Heart right ventricle (tissue), 16 donors: ENCODE measurements at regions of chr19 and their contacts with region 1.

Region 1: DNA sequence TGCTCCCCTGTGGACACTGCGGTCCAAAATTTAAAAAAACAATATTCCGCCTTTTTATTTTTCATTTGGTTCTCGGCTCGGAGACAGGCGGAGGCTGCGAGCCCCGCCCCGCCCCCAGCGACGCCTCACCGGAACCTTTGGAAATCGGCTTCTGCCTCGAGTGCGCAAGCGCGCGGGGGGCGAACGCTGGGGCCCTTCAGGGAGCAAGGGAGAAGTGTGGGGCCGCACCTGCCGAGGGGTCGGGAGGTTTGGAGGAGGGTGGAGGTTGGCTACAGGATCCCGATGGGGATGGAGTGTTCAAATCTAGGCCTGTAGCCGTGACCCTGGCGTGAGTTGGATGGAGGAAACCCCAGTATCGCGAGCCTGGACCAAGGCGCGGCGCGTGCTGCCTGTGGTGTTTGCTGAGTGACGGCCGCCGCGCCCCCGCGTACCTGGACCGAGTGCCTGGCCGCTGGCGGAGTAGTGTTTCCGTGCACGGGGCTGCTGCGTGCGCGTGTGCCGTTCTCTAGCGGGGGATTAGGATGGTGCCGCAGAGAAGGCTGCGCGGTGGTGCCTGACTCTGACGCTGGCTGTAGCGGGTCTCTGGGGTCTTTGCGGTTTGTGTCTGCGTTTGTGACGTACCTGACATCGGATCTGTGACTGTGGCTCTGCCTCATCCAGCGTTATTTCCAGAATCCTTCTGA is 565 bp upstream of the ZFP30 start:
- DNase-seq: peak; percentile 86 to 88
- ATAC-seq: peak; percentile 77 to 93 (median 88)
- H3K4me3 ChIP-seq: peak overlapping the region; percentile 63 to 90 (median 80)
- H3K27ac ChIP-seq: peak overlapping the region; percentile 39 to 93 (median 90)
- H3K4me1 ChIP-seq: peaks cover 0 to 31% (median 24%) of the 10 kb centered on the region in 9 donors
- H3K27me3 ChIP-seq: no peaks in the 10 kb centered on the region
- CTCF ChIP-seq: peak in 1 of 9 donors; percentile 9

Region 2: DNA sequence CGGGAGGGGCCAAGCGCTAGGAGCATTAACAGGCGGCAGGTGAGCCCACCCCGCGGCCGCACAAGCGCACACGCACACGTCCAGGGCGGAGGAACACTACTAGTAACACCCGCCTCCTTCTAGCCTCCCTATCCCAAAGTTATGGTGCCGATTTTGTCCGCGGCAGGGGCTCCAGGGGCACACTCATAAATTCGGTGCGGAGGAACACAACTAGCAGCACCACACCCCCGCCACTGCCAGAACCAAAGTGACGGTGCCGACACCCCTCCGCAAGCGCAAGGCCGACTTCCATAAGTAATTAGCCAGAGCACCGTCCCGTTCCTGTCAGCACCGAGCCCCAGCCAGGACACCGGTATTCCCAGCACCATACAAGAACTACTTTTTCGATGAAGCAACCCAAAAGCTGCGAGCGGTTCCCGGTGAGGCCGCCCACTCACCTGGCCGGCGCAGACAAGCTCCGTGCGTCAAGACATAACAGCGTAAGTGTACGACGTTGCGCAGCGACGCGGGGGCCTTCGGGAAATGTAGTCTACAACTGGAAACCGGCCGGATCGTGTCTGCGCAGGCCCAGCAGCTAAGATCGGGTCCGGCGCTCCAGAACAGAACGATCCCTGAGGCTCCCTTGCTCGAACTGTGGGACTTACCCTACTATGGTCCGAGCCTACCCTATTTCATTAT is 61.4 kb before region 1 on chr19 and contains the starts of genes ZNF540 and ZNF571:
- intact Hi-C with region 1: loop called in 1 of 10 experiments (anchors 5 kb)
- DNase-seq: peak; percentile 92 to 95
- ATAC-seq: peak; percentile 99 to 100 (median 100)
- H3K4me3 ChIP-seq: peak within 1 kb of the TSS; percentile 51 to 98 (median 80)
- H3K27ac ChIP-seq: peak within 1 kb of the TSS; percentile 63 to 93 (median 90)
- H3K4me1 ChIP-seq: peaks cover 0 to 22% (median 15%) of the 10 kb centered on the region in 9 donors
- H3K27me3 ChIP-seq: no peaks in the 10 kb centered on the region
- CTCF ChIP-seq: no peak
- total RNA-seq, gene ZNF540: 3.1 to 7.2 (median 5.0) TPM
- total RNA-seq, gene ZNF571: 2.1 to 5.1 (median 3.5) TPM

Region 3: DNA sequence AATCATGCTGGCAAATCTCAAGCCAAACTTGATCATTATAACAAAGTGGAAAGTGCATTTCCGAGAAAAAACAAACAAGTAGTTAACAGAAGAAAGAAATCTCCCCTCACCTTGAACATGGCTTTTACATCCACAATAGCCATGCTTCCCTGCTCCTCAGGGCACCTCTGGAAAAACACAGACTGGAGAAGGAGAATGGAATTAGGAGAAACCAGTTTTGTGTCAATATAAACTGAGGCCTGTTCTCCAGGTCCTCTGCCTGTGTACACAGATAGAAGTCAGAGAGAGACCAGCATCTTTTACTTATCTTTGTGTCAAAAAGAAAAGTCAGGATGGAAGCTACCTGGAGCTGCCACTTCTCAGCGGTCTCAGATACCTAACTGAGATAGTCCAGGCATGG is 30.5 kb after region 1 on chr19:
- intact Hi-C with region 1: loop called in 4 of 10 experiments (anchors 1 to 5 kb)
- DNase-seq: no peak
- ATAC-seq: no peak
- H3K4me3 ChIP-seq: no peak overlapping the region
- H3K27ac ChIP-seq: no peak overlapping the region
- H3K4me1 ChIP-seq: peaks cover 0 to 5% (median 2%) of the 10 kb centered on the region in 9 donors
- H3K27me3 ChIP-seq: no peaks in the 10 kb centered on the region
- CTCF ChIP-seq: no peak